Mucosa of descending colon (tissue), 3 donors: ENCODE measurements at regions of chr4 and their contacts with region 1.

Region 1: GRCh38 chr4:17636696-17637622 is 22.5 kb downstream of the MED28 start:
- DNase-seq: peak; percentile 66 to 87 (median 84)
- ATAC-seq: peak; percentile 95
- H3K4me3 ChIP-seq: no peak overlapping the region
- H3K4me1 ChIP-seq: no peaks in the 10 kb centered on the region
- CTCF ChIP-seq: peak; percentile 84

Region 2: GRCh38 chr4:17552427-17552826 is 84.5 kb before region 1 on chr4:
- intact Hi-C with region 1: loop called (anchors 5 to 10 kb)
- DNase-seq: no peak
- ATAC-seq: no peak
- H3K4me3 ChIP-seq: no peak overlapping the region
- H3K4me1 ChIP-seq: no peaks in the 10 kb centered on the region
- CTCF ChIP-seq: no peak

Region 3: GRCh38 chr4:17889692-17890091 is 252.7 kb after region 1 on chr4:
- intact Hi-C with region 1: no loop called
- DNase-seq: no peak
- ATAC-seq: no peak
- H3K4me3 ChIP-seq: no peak overlapping the region
- H3K4me1 ChIP-seq: no peaks in the 10 kb centered on the region
- CTCF ChIP-seq: no peak